ENCODE measurements at regions of chr3 and their contacts with region 1.

Region 1: GRCh38 chr3:45593708-45594609 is 592 bp upstream of the LIMD1 start:
- DNase-seq: peak; percentile 79 to 86
- H3K4me3 ChIP-seq: peak overlapping the region; percentile 80
- H3K4me3 Mint-ChIP-seq: peak overlapping the region; percentile 83
- H3K27ac Mint-ChIP-seq: peak overlapping the region; percentile 85
- H3K4me1 ChIP-seq: peaks cover 19% of the 10 kb centered on the region
- H3K4me1 Mint-ChIP-seq: peaks cover 17% of the 10 kb centered on the region
- H3K27me3 ChIP-seq: no peaks in the 10 kb centered on the region
- H3K27me3 Mint-ChIP-seq: no peaks in the 10 kb centered on the region
- CTCF ChIP-seq: no peak

Region 2: DNA sequence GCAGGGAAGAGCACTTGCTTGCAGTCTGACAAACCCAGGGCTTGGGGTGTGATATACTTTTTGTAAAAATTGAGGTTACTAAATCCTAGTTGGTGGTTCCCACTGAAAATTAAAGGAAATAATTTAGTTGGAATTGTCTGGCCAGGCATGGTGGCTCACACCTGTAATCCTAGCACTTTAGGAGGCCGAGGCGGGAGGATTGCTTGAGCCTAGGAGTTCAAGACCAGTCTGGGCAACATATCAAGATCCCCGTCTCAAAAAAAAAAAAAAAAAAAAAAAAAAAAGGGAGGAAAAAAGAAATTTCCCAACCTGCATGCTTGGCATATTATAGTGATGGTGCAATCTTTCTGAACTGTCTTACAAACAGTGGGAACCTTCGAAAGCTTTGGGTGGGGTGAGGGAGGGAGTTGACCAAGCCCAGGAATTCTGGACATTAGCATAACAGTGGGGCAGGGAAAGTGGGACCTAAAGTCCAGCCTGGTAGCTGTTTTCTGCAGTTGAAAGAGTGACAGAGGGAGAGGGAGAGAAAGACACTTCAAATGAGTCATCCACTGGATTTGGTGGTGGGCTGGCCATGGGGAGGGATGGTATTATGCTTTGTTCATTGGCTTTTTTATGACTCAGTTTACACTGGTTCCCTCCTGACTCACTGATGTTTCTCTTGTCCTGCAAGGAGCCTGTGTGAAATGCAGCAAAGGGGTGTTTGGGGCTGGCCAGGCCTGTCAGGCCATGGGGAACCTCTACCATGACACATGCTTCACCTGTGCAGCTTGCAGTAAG is 41.7 kb after region 1 on chr3:
- CTCF ChIA-PET with region 1: no interaction called
- POLR2A ChIA-PET with region 1: no interaction called
- intact Hi-C with region 1: loop called (anchors 5 kb)
- DNase-seq: peak; percentile 82 to 84
- H3K4me3 ChIP-seq: no peak overlapping the region
- H3K4me3 Mint-ChIP-seq: peak overlapping the region; percentile 52
- H3K27ac Mint-ChIP-seq: peak overlapping the region; percentile 96
- H3K4me1 ChIP-seq: peaks cover 51% of the 10 kb centered on the region
- H3K4me1 Mint-ChIP-seq: peaks cover 30% of the 10 kb centered on the region
- H3K27me3 ChIP-seq: no peaks in the 10 kb centered on the region
- H3K27me3 Mint-ChIP-seq: no peaks in the 10 kb centered on the region
- CTCF ChIP-seq: no peak

Region 3: GRCh38 chr3:45665101-45665572 is 71.2 kb after region 1 on chr3:
- CTCF ChIA-PET with region 1: interaction called, 8 read pairs
- POLR2A ChIA-PET with region 1: no interaction called
- intact Hi-C with region 1: loop called (anchors 2 kb)
- DNase-seq: peak; percentile 52 to 53
- H3K4me3 ChIP-seq: no peak overlapping the region
- H3K4me3 Mint-ChIP-seq: no peak overlapping the region
- H3K27ac Mint-ChIP-seq: no peak overlapping the region
- H3K4me1 ChIP-seq: no peaks in the 10 kb centered on the region; the same call in 1 of the 2 replicates
- H3K4me1 Mint-ChIP-seq: peaks cover under 1% of the 10 kb centered on the region
- H3K27me3 ChIP-seq: no peaks in the 10 kb centered on the region
- H3K27me3 Mint-ChIP-seq: no peaks in the 10 kb centered on the region
- CTCF ChIP-seq: peak; percentile 49 to 61

Measured in Caco-2 (cell line).